ENCODE measurements at regions of chr16 and their contacts with region 1.

Region 1: GRCh38 chr16:84504420-84505248 is at the start of gene MEAK7:
- DNase-seq: peak; percentile 97
- ATAC-seq: peak; percentile 96
- H3K4me3 Mint-ChIP-seq: peak within 1 kb of the TSS; percentile 88
- H3K27ac Mint-ChIP-seq: peak within 1 kb of the TSS; percentile 91
- H3K4me1 Mint-ChIP-seq: peaks cover 56% of the 10 kb centered on the region
- H3K27me3 Mint-ChIP-seq: no peaks in the 10 kb centered on the region
- CTCF ChIP-seq: no peak
- total RNA-seq, gene MEAK7: 9.8 and 15.0 TPM in 2 replicates

Region 2: GRCh38 chr16:84084570-84085270 is 419.9 kb before region 1 on chr16:
- CTCF ChIA-PET with region 1: interaction called, 4 read pairs
- POLR2A ChIA-PET with region 1: no interaction called
- intact Hi-C with region 1: loop called (anchors 5 kb)
- DNase-seq: peak; percentile 28
- ATAC-seq: peak; percentile 65
- H3K4me3 Mint-ChIP-seq: no peak overlapping the region
- H3K27ac Mint-ChIP-seq: no peak overlapping the region
- H3K4me1 Mint-ChIP-seq: peaks cover 45% of the 10 kb centered on the region
- H3K27me3 Mint-ChIP-seq: no peaks in the 10 kb centered on the region
- CTCF ChIP-seq: no peak

Region 3: DNA sequence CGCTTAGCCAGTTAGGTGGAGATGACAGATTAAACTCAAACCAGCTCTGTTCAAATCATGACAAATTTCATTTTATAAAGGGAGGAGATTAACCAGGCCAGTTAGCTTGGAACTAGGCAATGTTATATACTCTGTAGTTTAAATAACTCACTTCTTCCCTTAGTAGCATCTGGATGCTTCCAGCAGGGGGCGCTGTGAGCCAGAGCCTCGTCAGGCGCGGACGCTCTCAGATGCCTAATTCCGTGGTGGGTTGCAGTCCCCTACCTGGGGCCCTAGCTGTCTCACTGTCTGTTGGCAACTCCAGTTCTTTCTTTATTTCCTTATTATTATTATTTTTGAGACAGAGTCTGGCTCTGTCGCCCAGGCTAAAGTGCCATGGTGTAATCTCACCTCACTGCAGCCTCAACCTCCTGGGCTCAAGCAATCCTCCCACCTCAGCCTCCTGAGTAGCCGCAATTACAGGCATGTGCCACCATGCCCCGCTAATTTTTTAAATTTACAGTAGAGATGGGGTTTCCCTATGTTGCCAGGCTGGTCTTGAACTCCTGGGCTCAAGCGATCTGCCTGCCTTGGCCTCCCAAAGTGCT is 227.3 kb before region 1 on chr16:
- CTCF ChIA-PET with region 1: interaction called, 27 read pairs
- POLR2A ChIA-PET with region 1: no interaction called
- intact Hi-C with region 1: no loop called
- DNase-seq: peak; percentile 38
- ATAC-seq: no peak
- H3K4me3 Mint-ChIP-seq: no peak overlapping the region
- H3K27ac Mint-ChIP-seq: no peak overlapping the region
- H3K4me1 Mint-ChIP-seq: no peaks in the 10 kb centered on the region
- H3K27me3 Mint-ChIP-seq: peaks cover 2% of the 10 kb centered on the region
- CTCF ChIP-seq: peak; percentile 61

Region 4: GRCh38 chr16:84625556-84625955 is 120.9 kb after region 1 on chr16:
- CTCF ChIA-PET with region 1: interaction called, 166 read pairs
- POLR2A ChIA-PET with region 1: interaction called, 5 read pairs
- intact Hi-C with region 1: no loop called
- DNase-seq: no peak
- ATAC-seq: no peak
- H3K4me3 Mint-ChIP-seq: no peak overlapping the region
- H3K27ac Mint-ChIP-seq: no peak overlapping the region
- H3K4me1 Mint-ChIP-seq: peaks cover 30% of the 10 kb centered on the region
- H3K27me3 Mint-ChIP-seq: no peaks in the 10 kb centered on the region
- CTCF ChIP-seq: no peak

Region 5: DNA sequence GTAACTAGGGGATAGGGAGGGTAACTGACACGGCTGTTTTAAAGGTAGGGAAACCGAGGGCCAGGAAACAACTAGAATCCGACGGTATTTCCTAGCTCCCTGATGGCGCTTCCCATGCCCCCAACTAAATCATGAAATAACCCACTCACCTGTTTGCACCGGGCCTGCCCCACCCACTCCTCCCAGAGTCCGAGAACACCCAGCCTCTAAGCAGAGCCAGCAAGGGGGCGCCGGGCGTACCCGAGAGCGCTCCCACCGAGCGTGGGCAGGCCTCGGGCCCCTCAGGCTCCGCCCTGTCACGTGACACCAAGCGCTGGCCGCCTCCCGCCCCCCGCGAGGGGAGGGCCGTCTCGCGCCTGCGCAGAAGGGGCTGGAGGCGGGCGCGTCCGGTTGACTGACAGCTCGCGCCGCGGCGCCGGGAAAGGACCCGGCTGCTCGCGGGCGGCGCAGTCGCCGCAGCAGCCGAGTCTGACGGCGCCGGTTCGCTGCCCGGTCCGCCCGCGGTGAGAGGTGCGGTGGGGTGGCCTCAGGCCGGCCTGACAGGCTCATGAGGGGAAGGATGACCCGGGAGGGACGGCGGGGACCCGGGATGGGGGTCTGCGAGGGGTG is 522.8 kb after region 1 on chr16 and contains the start of gene KIAA0513:
- CTCF ChIA-PET with region 1: no interaction called
- POLR2A ChIA-PET with region 1: no interaction called
- intact Hi-C with region 1: loop called (anchors 5 kb)
- DNase-seq: peak; percentile 99
- ATAC-seq: peak; percentile 87
- H3K4me3 Mint-ChIP-seq: peak within 1 kb of the TSS; percentile 89
- H3K27ac Mint-ChIP-seq: peak within 1 kb of the TSS; percentile 88
- H3K4me1 Mint-ChIP-seq: peaks cover 42% of the 10 kb centered on the region
- H3K27me3 Mint-ChIP-seq: peaks cover 11% of the 10 kb centered on the region
- CTCF ChIP-seq: no peak
- total RNA-seq, gene KIAA0513: 0.62 and 1.1 TPM in 2 replicates